Sciatic nerve (tissue), 2 donors: ENCODE measurements at regions of chr19 and their contacts with region 1.

Region 1: DNA sequence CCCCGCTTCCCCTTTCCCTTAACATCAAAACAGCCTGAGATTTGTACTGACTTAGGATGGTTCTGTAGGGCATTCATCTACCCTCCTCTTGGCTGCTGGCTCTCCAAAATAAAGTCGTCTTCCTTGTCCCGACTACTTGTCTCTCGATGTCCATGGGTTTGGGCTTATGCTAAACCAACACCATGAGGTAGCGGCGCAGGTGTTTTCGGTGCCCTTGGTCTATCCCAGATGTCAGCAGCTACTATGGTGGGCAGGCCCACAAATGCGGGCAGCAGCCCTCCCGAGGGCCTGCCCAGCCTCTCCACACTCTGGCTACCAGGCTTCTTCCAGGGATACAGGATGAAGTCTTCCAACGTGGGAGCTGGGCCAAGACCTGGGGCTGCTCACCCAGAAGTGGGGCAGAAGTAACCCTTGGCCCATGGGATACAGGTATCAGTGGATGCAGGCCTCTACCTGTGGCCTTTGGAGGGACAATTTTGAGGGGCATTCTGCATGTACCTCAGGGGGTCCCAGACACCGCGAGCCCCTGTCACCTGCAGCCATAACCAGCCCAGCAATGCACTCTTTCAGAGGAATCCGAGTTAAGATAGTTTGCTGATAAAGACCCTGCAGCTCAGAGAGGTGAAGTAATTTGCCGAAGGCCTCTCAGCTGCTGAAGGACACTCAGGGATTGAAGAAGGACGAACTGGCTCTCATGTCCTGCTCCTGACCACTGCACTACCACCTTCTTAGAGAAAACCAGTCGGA is 47.8 kb upstream of the VSTM2B start:
- DNase-seq: no peak
- ATAC-seq: no peak

Region 2: GRCh38 chr19:29439688-29440550 is 38.1 kb before region 1 on chr19:
- intact Hi-C with region 1: loop called (anchors 1 kb)
- DNase-seq: no peak
- ATAC-seq: no peak

Region 3: DNA sequence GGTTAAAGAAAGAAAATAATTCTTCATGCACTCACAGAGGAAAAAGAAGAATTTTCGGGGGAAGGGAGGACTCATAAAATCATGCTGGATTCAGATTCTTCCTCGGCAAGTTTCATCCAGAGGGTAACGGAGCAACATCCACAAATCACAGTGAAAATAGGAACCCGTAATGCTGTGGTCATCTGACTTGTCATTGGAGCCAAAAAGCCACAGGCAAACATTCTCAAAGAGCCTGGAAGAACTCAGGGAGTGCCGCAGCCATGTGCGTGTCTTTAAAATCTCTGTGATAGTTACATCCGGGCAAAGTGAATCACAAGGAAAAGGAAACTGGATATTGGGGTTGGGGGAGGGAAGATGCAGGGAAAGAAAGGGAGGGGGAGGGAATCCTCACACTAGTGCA is 14.8 kb after region 1 on chr19:
- intact Hi-C with region 1: loop called (anchors 2 kb)
- DNase-seq: no peak
- ATAC-seq: no peak